Heart left ventricle (tissue), 16 donors: ENCODE measurements at regions of chr17 and their contacts with region 1.

Region 1: GRCh38 chr17:68909066-68909465 is 46.1 kb downstream of the ABCA8 start:
- DNase-seq: peak in 4 of 5 donors; percentile 40 to 51 (median 45)
- ATAC-seq: peak; percentile 35 to 89 (median 83)
- H3K4me3 ChIP-seq: no peak overlapping the region
- H3K27ac ChIP-seq: peak overlapping the region in 10 of 12 donors; percentile 13 to 86 (median 60)
- H3K4me1 ChIP-seq: peaks cover 0 to 32% (median 14%) of the 10 kb centered on the region in 12 donors
- H3K27me3 ChIP-seq: no peaks in the 10 kb centered on the region
- CTCF ChIP-seq: no peak
- POLR2A ChIP-seq: no peak

Region 2: GRCh38 chr17:69141431-69142174 is 232.5 kb after region 1 on chr17 and contains the start of gene ABCA6:
- intact Hi-C with region 1: no loop called
- DNase-seq: no peak
- ATAC-seq: peak; percentile 83 to 94 (median 88)
- H3K4me3 ChIP-seq: peak within 1 kb of the TSS in 11 of 12 donors; percentile 1 to 62 (median 39)
- H3K27ac ChIP-seq: peak within 1 kb of the TSS; percentile 41 to 84 (median 63)
- H3K4me1 ChIP-seq: peaks cover 0 to 20% (median 0%) of the 10 kb centered on the region in 12 donors
- H3K27me3 ChIP-seq: no peaks in the 10 kb centered on the region
- CTCF ChIP-seq: no peak
- POLR2A ChIP-seq: peak in 1 of 2 donors; percentile 38
- total RNA-seq, gene ABCA6: 6.3 to 30.1 (median 20.3) TPM

Region 3: GRCh38 chr17:69246726-69247375 is 337.8 kb after region 1 on chr17:
- intact Hi-C with region 1: loop called in 1 of 10 experiments (anchors 10 kb)
- DNase-seq: no peak
- ATAC-seq: peak in 2 of 4 donors; percentile 56 to 59
- H3K4me3 ChIP-seq: no peak overlapping the region
- H3K27ac ChIP-seq: no peak overlapping the region
- H3K4me1 ChIP-seq: no peaks in the 10 kb centered on the region
- H3K27me3 ChIP-seq: no peaks in the 10 kb centered on the region
- CTCF ChIP-seq: peak; percentile 43 to 77 (median 62)
- POLR2A ChIP-seq: no peak